GM12878 (cell line): ENCODE measurements at regions of chr22 and their contacts with region 1.

Region 1: DNA sequence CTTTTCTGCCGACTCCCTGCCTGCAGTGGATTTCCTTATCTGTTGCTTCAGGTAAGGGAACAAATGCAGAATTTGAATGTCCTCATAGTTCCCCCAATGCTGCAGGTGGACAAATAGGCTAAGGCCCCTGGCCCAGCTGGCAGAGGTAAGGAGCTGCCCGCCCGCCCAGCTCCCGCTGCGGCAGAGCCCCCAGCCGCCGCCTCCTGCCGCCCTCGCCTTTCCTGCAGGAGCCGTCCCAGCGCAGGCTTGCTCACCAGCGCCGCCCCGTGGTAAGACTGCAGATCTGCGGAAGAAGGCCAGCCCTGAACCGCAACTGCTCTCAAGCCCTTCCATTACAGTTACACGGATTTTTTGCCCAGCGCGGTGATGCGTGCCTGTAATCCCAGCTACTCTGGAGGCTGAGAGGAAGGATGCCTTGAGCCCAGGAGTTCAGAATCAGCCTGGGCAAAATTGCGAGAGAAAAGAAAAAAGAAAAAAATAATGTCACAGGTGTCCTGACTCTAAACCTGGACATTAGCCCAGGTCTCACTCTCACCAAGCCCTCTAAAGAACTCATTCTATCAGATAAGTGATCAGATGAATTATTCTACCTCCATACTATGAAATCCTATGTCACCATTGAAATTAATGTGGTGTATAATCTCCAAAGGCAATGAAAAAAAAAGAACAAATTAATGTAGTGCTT is 51.2 kb upstream of the EMID1 start:
- DNase-seq: no peak
- ATAC-seq: peak; percentile 86
- H3K4me3 ChIP-seq: no peak overlapping the region
- H3K27ac ChIP-seq: no peak overlapping the region
- H3K4me1 ChIP-seq: peaks cover 8% of the 10 kb centered on the region
- H3K27me3 ChIP-seq: no peaks in the 10 kb centered on the region; a peak in 1 of 4 replicates
- CTCF ChIP-seq: peak; percentile 86 to 97 (median 89)
- EP300 ChIP-seq: 0 out of 4 replicates have a peak, but pooled peaks of 1 of the 2 experiments have one; percentile 14
- POLR2A ChIP-seq: no peak
- RAD21 ChIP-seq: peak; percentile 80

Region 2: DNA sequence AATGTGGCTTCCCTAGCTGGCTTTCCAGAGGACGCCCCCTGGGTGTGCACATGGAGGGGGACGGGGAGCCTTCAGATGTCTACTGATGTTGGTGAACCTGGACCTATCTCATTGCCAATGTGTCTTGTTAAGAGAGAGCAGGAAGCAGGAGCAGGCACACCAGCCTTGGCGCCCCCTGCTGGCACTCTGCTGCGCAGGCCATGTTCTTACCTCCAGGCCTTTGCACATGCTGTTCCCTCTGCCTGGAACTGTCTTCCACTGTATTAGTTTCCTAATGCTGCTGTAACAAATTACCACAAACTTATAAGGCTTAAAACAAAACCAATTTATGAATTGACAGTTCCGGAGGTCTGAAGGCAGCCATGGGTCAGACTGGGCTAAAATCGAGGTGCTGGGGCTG is 1329.3 kb before region 1 on chr22:
- CTCF ChIA-PET with region 1: no interaction called
- POLR2A ChIA-PET with region 1: no interaction called
- RAD21 ChIA-PET with region 1: no interaction called
- SMC1A ChIA-PET with region 1: no interaction called
- in situ Hi-C with region 1: no loop called
- intact Hi-C with region 1: no loop called
- DNase-seq: no peak
- ATAC-seq: no peak
- H3K4me3 ChIP-seq: no peak overlapping the region
- H3K27ac ChIP-seq: no peak overlapping the region
- H3K4me1 ChIP-seq: no peaks in the 10 kb centered on the region
- H3K27me3 ChIP-seq: no peaks in the 10 kb centered on the region
- CTCF ChIP-seq: peak in 2 of 3 experiments; percentile 22 to 32; a peak in 2 of 6 replicates
- EP300 ChIP-seq: no peak
- POLR2A ChIP-seq: no peak
- RAD21 ChIP-seq: no peak

Region 3: DNA sequence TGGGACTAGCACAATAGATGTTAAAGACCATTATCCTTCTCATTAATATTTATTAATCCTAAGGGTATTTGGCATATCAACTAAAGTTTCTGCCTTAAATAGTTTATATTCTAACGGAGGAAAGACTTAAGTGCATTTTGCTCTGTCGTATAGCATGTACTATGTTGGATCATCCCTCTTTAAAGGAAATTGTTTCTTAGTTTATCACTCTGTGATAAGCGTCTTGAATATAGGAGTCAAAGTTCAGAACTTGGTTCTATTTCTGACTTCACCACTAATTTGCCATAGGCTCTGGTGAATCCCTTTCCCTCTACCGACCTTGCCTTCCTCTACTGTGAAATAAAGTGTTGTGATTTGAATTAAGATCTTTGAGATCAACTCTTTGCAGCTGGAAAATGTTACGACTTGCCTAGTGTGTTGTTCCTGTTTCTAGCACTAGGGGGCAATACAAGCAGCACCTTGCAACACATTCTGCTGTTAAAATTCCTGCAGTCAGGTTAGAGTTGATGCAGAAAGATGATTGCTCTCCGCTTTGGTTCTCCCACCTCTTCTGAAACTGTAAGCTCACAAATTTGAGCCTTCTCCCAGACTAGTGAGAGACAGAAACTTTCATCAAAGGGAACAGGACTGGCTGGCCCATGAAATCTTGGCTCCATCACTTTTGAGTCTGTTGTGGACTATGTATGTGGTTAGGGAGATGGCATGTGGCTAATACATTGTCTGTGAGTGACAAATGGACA is 299.0 kb before region 1 on chr22:
- CTCF ChIA-PET with region 1: interaction called, 23 read pairs
- POLR2A ChIA-PET with region 1: no interaction called
- RAD21 ChIA-PET with region 1: interaction called, 12 read pairs
- SMC1A ChIA-PET with region 1: interaction called, 10 read pairs
- in situ Hi-C with region 1: no loop called
- intact Hi-C with region 1: loop called (anchors 5 kb)
- DNase-seq: peak; percentile 27
- ATAC-seq: peak; percentile 79
- H3K4me3 ChIP-seq: no peak overlapping the region
- H3K27ac ChIP-seq: no peak overlapping the region
- H3K4me1 ChIP-seq: no peaks in the 10 kb centered on the region
- H3K27me3 ChIP-seq: no peaks in the 10 kb centered on the region; a peak in 1 of 4 replicates
- CTCF ChIP-seq: peak; percentile 85 to 90 (median 87); a peak in 5 of 6 replicates
- EP300 ChIP-seq: no peak
- POLR2A ChIP-seq: no peak
- RAD21 ChIP-seq: peak; percentile 94

Region 4: DNA sequence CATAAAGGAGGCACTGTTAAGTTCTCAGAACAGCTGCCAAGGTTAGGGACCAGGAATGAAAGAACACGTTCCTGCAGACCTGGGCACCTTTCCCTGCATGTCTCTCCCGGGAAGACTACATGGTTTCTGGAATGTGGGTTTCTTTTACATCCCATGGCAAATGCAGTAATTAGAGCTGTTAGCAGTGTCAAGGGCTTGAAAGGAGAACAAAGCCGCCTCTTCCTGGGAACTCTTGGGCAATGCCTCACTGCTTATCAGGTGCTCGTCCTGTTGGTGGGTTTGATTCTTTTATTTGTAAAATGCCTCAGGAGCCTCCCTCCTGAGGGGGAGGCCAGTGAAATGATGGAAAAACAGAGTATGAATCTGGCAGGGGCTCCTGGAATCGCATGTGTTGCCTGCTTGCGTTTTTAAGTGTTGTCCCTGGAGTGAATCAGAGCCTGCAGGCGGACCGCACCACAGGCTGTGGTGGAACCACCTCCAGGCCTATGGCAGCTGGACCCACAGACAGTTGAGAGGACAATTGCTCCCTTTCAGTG is 92.2 kb before region 1 on chr22:
- CTCF ChIA-PET with region 1: interaction called, 20 read pairs
- POLR2A ChIA-PET with region 1: no interaction called
- RAD21 ChIA-PET with region 1: interaction called, 4 read pairs
- SMC1A ChIA-PET with region 1: interaction called, 5 read pairs
- in situ Hi-C with region 1: no loop called
- intact Hi-C with region 1: no loop called
- DNase-seq: no peak
- ATAC-seq: no peak
- H3K4me3 ChIP-seq: no peak overlapping the region
- H3K27ac ChIP-seq: no peak overlapping the region
- H3K4me1 ChIP-seq: no peaks in the 10 kb centered on the region
- H3K27me3 ChIP-seq: peaks cover 0 to 11% of the 10 kb centered on the region in 2 experiments; a peak in 1 of 4 replicates
- CTCF ChIP-seq: no peak
- EP300 ChIP-seq: no peak
- POLR2A ChIP-seq: no peak
- RAD21 ChIP-seq: no peak

Region 5: GRCh38 chr22:29079218-29079901 is 75.1 kb before region 1 on chr22:
- CTCF ChIA-PET with region 1: interaction called, 14 read pairs
- POLR2A ChIA-PET with region 1: no interaction called
- RAD21 ChIA-PET with region 1: interaction called, 4 read pairs
- SMC1A ChIA-PET with region 1: interaction called, 6 read pairs
- in situ Hi-C with region 1: no loop called
- intact Hi-C with region 1: loop called (anchors 5 kb)
- DNase-seq: no peak
- ATAC-seq: no peak
- H3K4me3 ChIP-seq: no peak overlapping the region
- H3K27ac ChIP-seq: no peak overlapping the region
- H3K4me1 ChIP-seq: 0 out of 2 replicates have a peak, but pooled peaks cover 3% of the 10 kb centered on the region
- H3K27me3 ChIP-seq: peaks cover 0 to 4% of the 10 kb centered on the region in 2 experiments; a peak in 2 of 4 replicates
- CTCF ChIP-seq: no peak
- EP300 ChIP-seq: no peak
- POLR2A ChIP-seq: no peak
- RAD21 ChIP-seq: no peak

Region 6: DNA sequence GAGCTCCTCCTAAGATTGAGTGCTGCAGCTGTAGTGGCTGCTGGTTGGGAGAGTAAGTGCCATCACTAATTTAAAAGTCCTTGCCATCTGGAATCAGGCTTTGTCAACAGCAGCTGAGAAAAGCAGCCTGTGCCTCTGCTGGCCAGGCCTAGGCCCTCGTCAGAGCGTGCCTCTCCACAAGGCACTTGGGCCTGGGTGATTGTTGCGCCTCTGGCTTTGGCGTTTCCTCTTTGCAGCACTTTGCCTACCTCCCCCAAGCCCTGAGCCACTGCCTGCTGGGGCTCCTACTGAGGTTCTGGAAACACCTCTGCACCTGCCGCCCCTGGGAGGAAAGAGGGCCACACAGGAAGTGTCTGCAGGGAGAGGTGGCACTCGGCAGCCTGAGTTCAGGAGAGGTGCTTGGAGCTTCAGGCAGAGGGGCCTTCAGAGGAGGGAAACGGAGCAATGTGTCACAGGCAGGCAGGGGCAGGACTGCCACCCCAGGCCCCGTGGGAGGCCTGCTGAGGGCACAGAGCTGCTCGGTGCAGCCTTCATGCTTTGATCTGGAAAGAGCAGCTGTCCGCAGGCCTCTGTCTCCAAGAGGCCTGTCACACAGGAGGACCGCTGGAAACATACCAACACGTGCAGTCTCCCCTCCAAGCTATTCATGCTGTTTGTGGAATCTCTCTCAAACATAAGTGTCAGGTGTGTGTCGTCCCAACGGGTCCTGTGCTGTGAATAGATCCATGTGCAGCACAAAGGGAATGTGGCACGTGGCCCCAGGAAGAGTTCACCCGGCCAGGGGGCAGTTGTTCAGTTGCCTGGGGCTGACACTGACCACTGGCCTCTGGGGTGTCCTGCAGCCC is 10.3 kb before region 1 on chr22:
- CTCF ChIA-PET with region 1: interaction called, 13 read pairs
- POLR2A ChIA-PET with region 1: no interaction called
- RAD21 ChIA-PET with region 1: interaction called, 6 read pairs
- SMC1A ChIA-PET with region 1: interaction called, 6 read pairs
- in situ Hi-C with region 1: no loop called
- intact Hi-C with region 1: no loop called
- DNase-seq: no peak
- ATAC-seq: no peak
- H3K4me3 ChIP-seq: no peak overlapping the region
- H3K27ac ChIP-seq: no peak overlapping the region
- H3K4me1 ChIP-seq: no peaks in the 10 kb centered on the region
- H3K27me3 ChIP-seq: no peaks in the 10 kb centered on the region; a peak in 2 of 4 replicates
- CTCF ChIP-seq: no peak
- EP300 ChIP-seq: no peak
- POLR2A ChIP-seq: no peak
- RAD21 ChIP-seq: no peak

Region 7: GRCh38 chr22:29202212-29203192 is 48.0 kb after region 1 on chr22:
- CTCF ChIA-PET with region 1: interaction called, 37 read pairs
- POLR2A ChIA-PET with region 1: interaction called, 10 read pairs
- RAD21 ChIA-PET with region 1: interaction called, 8 read pairs
- SMC1A ChIA-PET with region 1: interaction called, 18 read pairs
- in situ Hi-C with region 1: no loop called
- intact Hi-C with region 1: loop called (anchors 1 kb)
- DNase-seq: peak; percentile 91
- ATAC-seq: peak; percentile 77
- H3K4me3 ChIP-seq: peak overlapping the region; percentile 15; the same call in 1 of the 2 replicates
- H3K27ac ChIP-seq: peak overlapping the region; percentile 90
- H3K4me1 ChIP-seq: peaks cover 45% of the 10 kb centered on the region
- H3K27me3 ChIP-seq: no peaks in the 10 kb centered on the region; a peak in 1 of 4 replicates
- CTCF ChIP-seq: peak; percentile 41 to 43 (median 42); a peak in 4 of 6 replicates
- EP300 ChIP-seq: peak; percentile 76 to 94
- POLR2A ChIP-seq: peak; percentile 79
- RAD21 ChIP-seq: peak; percentile 15; the same call in 1 of the 2 replicates

Region 8: GRCh38 chr22:29245637-29246385 is 91.3 kb after region 1 on chr22:
- CTCF ChIA-PET with region 1: interaction called, 62 read pairs
- POLR2A ChIA-PET with region 1: interaction called, 5 read pairs
- RAD21 ChIA-PET with region 1: interaction called, 16 read pairs
- SMC1A ChIA-PET with region 1: interaction called, 13 read pairs
- in situ Hi-C with region 1: no loop called
- intact Hi-C with region 1: loop called (anchors 1 kb)
- DNase-seq: no peak
- ATAC-seq: peak; percentile 96
- H3K4me3 ChIP-seq: no peak overlapping the region
- H3K27ac ChIP-seq: no peak overlapping the region
- H3K4me1 ChIP-seq: no peaks in the 10 kb centered on the region
- H3K27me3 ChIP-seq: no peaks in the 10 kb centered on the region
- CTCF ChIP-seq: peak; percentile 92 to 98 (median 96)
- EP300 ChIP-seq: no peak
- POLR2A ChIP-seq: no peak
- RAD21 ChIP-seq: peak; percentile 95